Thyroid gland (tissue), 4 donors: ENCODE measurements at regions of chr16 and their contacts with region 1.

Region 1: DNA sequence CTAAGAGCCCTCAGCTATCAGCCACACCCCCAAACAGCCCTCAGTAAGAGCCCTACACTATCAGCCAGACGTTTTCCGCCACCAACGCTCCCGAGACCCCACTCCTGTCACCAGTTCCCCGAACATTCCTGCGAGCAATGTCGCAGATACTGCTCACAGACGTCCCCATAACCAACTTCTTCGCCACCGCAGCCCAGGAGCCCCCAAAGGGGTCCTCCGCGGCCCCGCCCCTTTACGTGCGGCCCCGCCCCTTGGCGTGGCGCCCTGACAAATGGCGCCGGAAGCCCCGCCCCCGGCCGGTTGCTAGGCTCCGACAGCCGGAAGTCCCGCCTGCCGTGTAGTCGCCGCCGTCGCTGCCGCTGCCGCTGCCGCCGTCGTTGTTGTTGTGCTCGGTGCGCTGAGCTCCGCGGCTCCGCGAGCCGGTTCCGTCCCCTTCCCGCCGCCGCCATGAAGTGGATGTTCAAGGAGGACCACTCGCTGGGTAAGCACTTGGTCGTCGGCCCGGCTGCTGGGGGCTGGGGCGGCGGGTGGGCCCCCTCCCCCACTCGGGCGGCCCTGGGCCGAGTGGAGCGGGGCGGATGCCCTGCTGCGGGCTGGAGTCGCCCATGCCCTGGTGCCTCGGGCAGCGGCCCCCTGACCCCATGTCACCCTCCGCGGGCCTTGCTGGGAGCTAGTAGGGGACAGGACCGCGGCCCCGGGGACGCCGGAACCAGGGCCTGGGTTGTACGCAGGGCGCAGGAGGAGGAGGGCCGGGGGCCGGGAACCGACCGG is at the start of gene GABARAPL2:
- DNase-seq: peak; percentile 76 to 77
- H3K4me3 ChIP-seq: peak within 1 kb of the TSS; percentile 62 to 90 (median 77)
- H3K27ac ChIP-seq: peak within 1 kb of the TSS; percentile 17 to 64 (median 61)
- H3K4me1 ChIP-seq: peaks cover 15 to 21% of the 10 kb centered on the region in 2 donors
- H3K27me3 ChIP-seq: no peaks in the 10 kb centered on the region
- CTCF ChIP-seq: peak in 1 of 6 experiments; percentile 4
- POLR2A ChIP-seq: peak in 1 of 2 donors; percentile 89
- total RNA-seq, gene GABARAPL2: 75.3 to 223 (median 122) TPM

Region 2: GRCh38 chr16:75519881-75520280 is 46.3 kb before region 1 on chr16:
- intact Hi-C with region 1: loop called (anchors 10 kb)
- DNase-seq: no peak
- H3K4me3 ChIP-seq: no peak overlapping the region
- H3K27ac ChIP-seq: no peak overlapping the region
- H3K4me1 ChIP-seq: peaks cover 9 to 10% of the 10 kb centered on the region in 2 donors
- H3K27me3 ChIP-seq: no peaks in the 10 kb centered on the region
- CTCF ChIP-seq: no peak
- POLR2A ChIP-seq: no peak